AG04450 (cell line): ENCODE measurements at regions of chr16 and their contacts with region 1.

Region 1: GRCh38 chr16:53881371-53881770 is 177.4 kb downstream of the FTO start:
- DNase-seq: peak; percentile 27
- H3K4me3 ChIP-seq: no peak overlapping the region
- H3K27ac ChIP-seq: no peak overlapping the region
- H3K27me3 ChIP-seq: no peaks in the 10 kb centered on the region
- CTCF ChIP-seq: no peak

Region 2: GRCh38 chr16:53892155-53892554 is 10.8 kb after region 1 on chr16:
- CTCF ChIA-PET with region 1: interaction called, 14 read pairs
- POLR2A ChIA-PET with region 1: no interaction called
- DNase-seq: peak; percentile 49
- H3K4me3 ChIP-seq: no peak overlapping the region
- H3K27ac ChIP-seq: no peak overlapping the region
- H3K27me3 ChIP-seq: no peaks in the 10 kb centered on the region
- CTCF ChIP-seq: peak; percentile 81